Activated B cell treated with CpG ODN at 0.5 μM for 24 hours (primary cell): ENCODE measurements at regions of chr9 and their contacts with region 1.

Region 1: GRCh38 chr9:72280913-72281500 is 84.0 kb downstream of the ZFAND5 start:
- DNase-seq: peak; percentile 27
- ATAC-seq: peak; percentile 87
- H3K4me3 Mint-ChIP-seq: no peak overlapping the region
- H3K27ac Mint-ChIP-seq: no peak overlapping the region
- H3K4me1 Mint-ChIP-seq: no peaks in the 10 kb centered on the region
- H3K27me3 Mint-ChIP-seq: peaks cover 4% of the 10 kb centered on the region
- CTCF ChIP-seq: peak; percentile 67

Region 2: DNA sequence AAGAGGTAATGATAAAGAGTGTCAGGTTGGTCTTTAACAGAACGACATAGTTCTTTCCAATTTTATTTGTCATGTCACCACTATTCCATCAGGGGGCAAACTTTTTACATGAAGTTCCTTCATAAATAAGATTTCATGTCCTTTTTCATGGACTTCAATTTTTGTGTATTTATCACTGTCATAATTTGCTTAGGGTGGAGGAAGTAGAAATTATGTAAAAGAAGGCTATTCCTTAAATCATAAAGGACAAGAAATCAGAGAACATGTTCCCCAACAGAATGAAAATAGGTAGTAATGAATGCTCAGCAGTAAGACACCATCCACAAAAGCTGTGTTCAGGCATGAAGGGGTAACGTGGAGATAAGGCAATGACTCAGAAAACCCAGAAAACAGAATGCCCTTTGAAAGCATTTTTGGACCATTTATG is 11.3 kb after region 1 on chr9:
- CTCF ChIA-PET with region 1: interaction called, 19 read pairs
- POLR2A ChIA-PET with region 1: no interaction called
- intact Hi-C with region 1: no loop called
- DNase-seq: no peak
- ATAC-seq: peak; percentile 52
- H3K4me3 Mint-ChIP-seq: no peak overlapping the region
- H3K27ac Mint-ChIP-seq: no peak overlapping the region
- H3K4me1 Mint-ChIP-seq: peaks cover 17% of the 10 kb centered on the region
- H3K27me3 Mint-ChIP-seq: no peaks in the 10 kb centered on the region
- CTCF ChIP-seq: no peak

Region 3: GRCh38 chr9:72592502-72593403 is 311.7 kb after region 1 on chr9:
- CTCF ChIA-PET with region 1: interaction called, 120 read pairs
- POLR2A ChIA-PET with region 1: no interaction called
- intact Hi-C with region 1: loop called (anchors 1 kb)
- DNase-seq: no peak
- ATAC-seq: peak; percentile 68
- H3K4me3 Mint-ChIP-seq: no peak overlapping the region
- H3K27ac Mint-ChIP-seq: no peak overlapping the region
- H3K4me1 Mint-ChIP-seq: peaks cover 4% of the 10 kb centered on the region
- H3K27me3 Mint-ChIP-seq: peaks cover 2% of the 10 kb centered on the region
- CTCF ChIP-seq: peak; percentile 41

Region 4: DNA sequence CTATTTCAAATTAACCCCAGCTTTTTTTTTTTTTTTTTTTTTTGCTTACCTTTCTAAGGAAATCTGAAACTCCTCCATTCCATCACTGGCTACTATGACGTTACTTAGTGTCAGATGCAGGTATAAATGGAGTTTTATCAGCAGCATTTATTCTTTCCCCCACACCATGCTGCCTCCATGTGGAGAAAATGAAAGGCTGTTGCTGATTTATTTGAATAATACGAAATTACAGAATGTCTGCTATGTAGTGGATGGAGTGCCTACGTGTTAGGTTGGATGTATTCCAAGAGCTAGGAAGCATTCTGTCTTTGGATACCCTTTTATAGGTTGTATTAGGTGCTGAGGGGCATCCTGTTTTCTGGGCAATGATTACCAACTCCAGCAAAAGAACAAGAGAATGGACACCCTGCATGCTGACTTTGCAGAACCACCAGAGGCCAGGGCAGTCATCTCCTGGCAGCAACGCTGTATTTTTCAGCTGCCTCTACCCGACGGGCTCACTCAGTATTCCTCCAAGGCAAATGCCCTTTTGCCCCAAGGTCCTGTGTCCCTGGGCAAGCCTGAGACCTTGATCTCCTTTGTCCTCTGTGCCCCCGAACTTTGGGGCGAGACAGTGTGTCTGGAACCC is 472.4 kb after region 1 on chr9:
- CTCF ChIA-PET with region 1: interaction called, 5 read pairs
- POLR2A ChIA-PET with region 1: no interaction called
- intact Hi-C with region 1: loop called (anchors 5 kb)
- DNase-seq: no peak
- ATAC-seq: no peak
- H3K4me3 Mint-ChIP-seq: no peak overlapping the region
- H3K27ac Mint-ChIP-seq: no peak overlapping the region
- H3K4me1 Mint-ChIP-seq: no peaks in the 10 kb centered on the region
- H3K27me3 Mint-ChIP-seq: no peaks in the 10 kb centered on the region
- CTCF ChIP-seq: no peak

Region 5: DNA sequence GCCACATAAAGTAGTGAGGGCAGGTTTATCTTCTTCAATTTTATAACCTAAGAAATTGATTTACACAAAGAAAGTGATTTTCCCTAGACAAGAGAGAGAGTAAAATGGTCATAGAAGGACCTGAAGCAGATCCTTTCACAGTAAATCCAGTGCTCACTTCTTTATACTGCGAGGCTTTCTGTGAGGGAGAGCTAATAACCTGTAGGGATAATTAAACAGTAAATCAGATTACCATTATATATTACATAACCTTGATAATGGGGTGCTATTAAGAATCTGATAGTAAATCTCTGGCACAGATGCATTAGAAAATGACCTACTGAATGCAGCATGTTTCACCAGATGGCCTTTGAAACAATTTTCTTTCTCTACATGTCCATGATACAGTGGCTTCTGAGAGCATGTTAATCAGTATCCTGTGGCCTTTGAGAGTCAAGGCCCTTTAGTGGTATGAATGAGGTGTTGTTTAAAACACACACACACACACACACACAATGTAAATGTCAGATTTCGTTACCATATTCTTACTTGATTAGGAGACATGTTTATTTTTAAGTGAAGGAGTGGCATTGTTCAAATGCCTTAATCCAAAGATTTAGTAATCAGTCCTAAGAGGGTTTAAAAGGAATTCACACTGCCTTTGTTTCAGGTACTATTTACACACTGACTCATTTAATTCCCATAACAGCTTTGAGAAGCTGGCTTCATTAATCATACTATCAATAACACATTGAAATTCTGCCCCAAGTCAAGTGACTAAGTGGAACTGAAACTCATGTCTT is 547.1 kb after region 1 on chr9:
- CTCF ChIA-PET with region 1: interaction called, 4 read pairs
- POLR2A ChIA-PET with region 1: no interaction called
- intact Hi-C with region 1: loop called (anchors 2 kb)
- DNase-seq: no peak
- ATAC-seq: no peak
- H3K4me3 Mint-ChIP-seq: no peak overlapping the region
- H3K27ac Mint-ChIP-seq: no peak overlapping the region
- H3K4me1 Mint-ChIP-seq: no peaks in the 10 kb centered on the region
- H3K27me3 Mint-ChIP-seq: no peaks in the 10 kb centered on the region
- CTCF ChIP-seq: no peak

Region 6: DNA sequence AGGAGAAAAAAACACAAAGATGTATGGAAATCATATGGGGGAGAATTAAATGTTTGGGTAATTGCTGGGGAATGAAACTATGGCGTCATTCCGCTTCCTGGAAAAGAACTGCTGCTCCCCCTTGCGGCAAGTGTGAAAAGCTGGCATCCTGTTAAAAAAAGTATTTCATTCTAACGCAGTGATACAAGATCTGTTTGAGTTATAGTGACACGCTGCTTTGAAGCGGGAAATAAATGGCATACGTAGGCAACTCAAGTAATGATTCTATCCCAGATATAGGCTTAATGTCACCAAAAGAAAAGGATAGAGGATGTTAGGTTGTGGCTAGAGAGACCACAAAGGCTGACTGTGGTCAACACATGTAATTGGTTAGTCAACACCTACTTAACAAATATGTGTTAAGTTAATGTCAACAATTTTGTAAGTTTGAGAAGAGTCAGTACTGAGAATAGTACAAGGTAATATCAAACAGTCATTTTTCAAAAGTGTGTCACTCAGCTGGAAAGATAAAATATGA is 742.1 kb after region 1 on chr9:
- CTCF ChIA-PET with region 1: interaction called, 24 read pairs
- POLR2A ChIA-PET with region 1: no interaction called
- intact Hi-C with region 1: loop called (anchors 1 kb)
- DNase-seq: no peak
- ATAC-seq: no peak
- H3K4me3 Mint-ChIP-seq: no peak overlapping the region
- H3K27ac Mint-ChIP-seq: no peak overlapping the region
- H3K4me1 Mint-ChIP-seq: peaks cover 42% of the 10 kb centered on the region
- H3K27me3 Mint-ChIP-seq: peaks cover 3% of the 10 kb centered on the region
- CTCF ChIP-seq: peak; percentile 39

Region 7: GRCh38 chr9:73183917-73184861 is 903.2 kb after region 1 on chr9:
- CTCF ChIA-PET with region 1: no interaction called
- POLR2A ChIA-PET with region 1: no interaction called
- intact Hi-C with region 1: loop called (anchors 1 kb)
- DNase-seq: no peak
- ATAC-seq: no peak
- H3K4me3 Mint-ChIP-seq: no peak overlapping the region
- H3K27ac Mint-ChIP-seq: no peak overlapping the region
- H3K4me1 Mint-ChIP-seq: no peaks in the 10 kb centered on the region
- H3K27me3 Mint-ChIP-seq: peaks cover 3% of the 10 kb centered on the region
- CTCF ChIP-seq: no peak